B cell (primary cell): ENCODE measurements at regions of chr11 and their contacts with region 1.

Region 1: GRCh38 chr11:98766903-98767302 is 253.8 kb upstream of the CNTN5 start:
- DNase-seq: no peak
- ATAC-seq: no peak
- H3K4me3 ChIP-seq: no peak overlapping the region
- H3K4me3 Mint-ChIP-seq: no peak overlapping the region
- H3K27ac ChIP-seq: no peak overlapping the region
- H3K27ac Mint-ChIP-seq: no peak overlapping the region
- H3K4me1 ChIP-seq: no peaks in the 10 kb centered on the region
- H3K4me1 Mint-ChIP-seq: no peaks in the 10 kb centered on the region
- H3K27me3 ChIP-seq: no peaks in the 10 kb centered on the region
- H3K27me3 Mint-ChIP-seq: no peaks in the 10 kb centered on the region
- CTCF ChIP-seq: no peak

Region 2: GRCh38 chr11:96925862-96926261 is 1841.0 kb before region 1 on chr11:
- CTCF ChIA-PET with region 1: no interaction called
- POLR2A ChIA-PET with region 1: no interaction called
- intact Hi-C with region 1: loop called (anchors 5 kb)
- DNase-seq: no peak
- ATAC-seq: no peak
- H3K4me3 ChIP-seq: no peak overlapping the region
- H3K4me3 Mint-ChIP-seq: no peak overlapping the region
- H3K27ac ChIP-seq: no peak overlapping the region
- H3K27ac Mint-ChIP-seq: no peak overlapping the region
- H3K4me1 ChIP-seq: no peaks in the 10 kb centered on the region
- H3K4me1 Mint-ChIP-seq: no peaks in the 10 kb centered on the region
- H3K27me3 ChIP-seq: no peaks in the 10 kb centered on the region
- H3K27me3 Mint-ChIP-seq: no peaks in the 10 kb centered on the region
- CTCF ChIP-seq: no peak

Region 3: GRCh38 chr11:99098751-99099150 is 331.8 kb after region 1 on chr11:
- CTCF ChIA-PET with region 1: no interaction called
- POLR2A ChIA-PET with region 1: no interaction called
- intact Hi-C with region 1: no loop called
- DNase-seq: no peak
- ATAC-seq: no peak
- H3K4me3 ChIP-seq: no peak overlapping the region
- H3K4me3 Mint-ChIP-seq: no peak overlapping the region
- H3K27ac ChIP-seq: no peak overlapping the region
- H3K27ac Mint-ChIP-seq: no peak overlapping the region
- H3K4me1 ChIP-seq: no peaks in the 10 kb centered on the region
- H3K4me1 Mint-ChIP-seq: no peaks in the 10 kb centered on the region
- H3K27me3 ChIP-seq: no peaks in the 10 kb centered on the region
- H3K27me3 Mint-ChIP-seq: no peaks in the 10 kb centered on the region
- CTCF ChIP-seq: no peak